CD4-positive, alpha-beta memory T cell (primary cell): ENCODE measurements at regions of chr6 and their contacts with region 1.

Region 1: DNA sequence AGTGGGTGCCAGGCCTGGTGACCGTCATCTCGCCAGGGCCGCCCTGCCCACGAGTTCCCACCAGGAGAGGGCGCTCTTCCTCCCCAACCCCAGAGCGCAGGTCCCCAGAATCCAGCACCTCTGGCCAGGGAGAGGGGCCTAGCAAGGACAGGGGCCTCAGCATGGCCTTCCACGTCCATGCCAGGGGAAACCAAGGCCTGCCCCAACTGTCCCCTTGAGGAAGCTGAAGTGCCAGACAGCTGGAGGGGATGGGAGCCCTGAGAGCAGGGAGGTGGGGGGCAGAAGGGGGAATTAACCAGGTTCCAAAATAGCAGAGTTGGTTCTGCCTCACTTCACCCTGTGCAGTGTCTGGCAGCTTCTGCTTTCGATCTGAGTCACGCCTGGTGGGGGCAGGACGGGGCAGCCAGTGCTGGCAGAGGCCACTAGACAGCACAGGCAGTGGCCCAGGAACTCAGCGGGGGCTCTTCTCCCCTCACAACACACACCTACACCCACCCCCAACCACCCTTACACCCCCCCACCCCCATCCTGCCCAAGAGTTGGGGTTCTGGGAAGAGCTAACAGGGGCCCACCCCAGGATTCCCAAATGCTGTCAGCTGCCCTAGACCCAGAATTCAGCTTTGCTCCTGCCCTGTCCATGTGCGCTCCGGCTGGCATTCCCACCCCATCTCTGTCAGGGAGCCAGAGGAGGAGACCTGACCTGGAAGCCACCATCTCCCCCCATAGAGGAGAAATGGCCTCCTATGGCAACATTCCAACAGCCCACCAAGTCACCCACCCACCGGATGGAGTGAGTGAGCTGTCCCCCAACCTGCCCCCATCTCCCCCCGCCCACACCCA is 29.2 kb downstream of the TFEB start:
- DNase-seq: peak; percentile 21 to 64 (median 31)
- H3K4me3 ChIP-seq: no peak overlapping the region
- H3K4me3 Mint-ChIP-seq: peak overlapping the region in 3 of 8 donors; percentile 63 to 86 (median 70)
- H3K27ac ChIP-seq: no peak overlapping the region
- H3K27ac Mint-ChIP-seq: peak overlapping the region in 6 of 7 donors; percentile 8 to 81 (median 60)
- H3K4me1 ChIP-seq: peaks cover 35% of the 10 kb centered on the region
- H3K4me1 Mint-ChIP-seq: peaks cover 28 to 61% (median 39%) of the 10 kb centered on the region in 4 donors
- H3K27me3 ChIP-seq: no peaks in the 10 kb centered on the region
- H3K27me3 Mint-ChIP-seq: no peaks in the 10 kb centered on the region

Region 2: GRCh38 chr6:41735427-41736356 is 29.5 kb after region 1 on chr6 and contains the start of gene TFEB:
- CTCF ChIA-PET with region 1: interaction called, 13 read pairs
- POLR2A ChIA-PET with region 1: interaction called, 34 read pairs
- intact Hi-C with region 1: loop called (anchors 1 kb)
- DNase-seq: peak; percentile 92 to 95 (median 92)
- H3K4me3 ChIP-seq: peak within 1 kb of the TSS in 1 of 2 donors; percentile 64
- H3K4me3 Mint-ChIP-seq: peak within 1 kb of the TSS; percentile 77 to 91 (median 82)
- H3K27ac ChIP-seq: peak within 1 kb of the TSS; percentile 75
- H3K27ac Mint-ChIP-seq: peak within 1 kb of the TSS; percentile 42 to 93 (median 76)
- H3K4me1 ChIP-seq: peaks cover 38% of the 10 kb centered on the region
- H3K4me1 Mint-ChIP-seq: peaks cover 16 to 35% (median 26%) of the 10 kb centered on the region in 4 donors
- H3K27me3 ChIP-seq: no peaks in the 10 kb centered on the region
- H3K27me3 Mint-ChIP-seq: peaks cover 0 to 1% of the 10 kb centered on the region in 2 donors
- total RNA-seq, gene TFEB: 12.2 to 15.7 TPM